Right cardiac atrium (tissue), 5 donors: ENCODE measurements at regions of chr1 and their contacts with region 1.

Region 1: GRCh38 chr1:8727809-8728213 is 89.6 kb downstream of the RERE start:
- DNase-seq: peak; percentile 50 to 86 (median 79)
- ATAC-seq: peak; percentile 50 to 76
- H3K4me3 ChIP-seq: no peak overlapping the region
- H3K27ac ChIP-seq: no peak overlapping the region
- H3K4me1 ChIP-seq: no peaks in the 10 kb centered on the region
- H3K27me3 ChIP-seq: no peaks in the 10 kb centered on the region

Region 2: GRCh38 chr1:8554956-8555534 is 172.8 kb before region 1 on chr1:
- intact Hi-C with region 1: loop called (anchors 5 to 10 kb)
- DNase-seq: no peak
- ATAC-seq: no peak
- H3K4me3 ChIP-seq: no peak overlapping the region
- H3K27ac ChIP-seq: no peak overlapping the region
- H3K4me1 ChIP-seq: peaks cover 1% of the 10 kb centered on the region
- H3K27me3 ChIP-seq: no peaks in the 10 kb centered on the region

Region 3: DNA sequence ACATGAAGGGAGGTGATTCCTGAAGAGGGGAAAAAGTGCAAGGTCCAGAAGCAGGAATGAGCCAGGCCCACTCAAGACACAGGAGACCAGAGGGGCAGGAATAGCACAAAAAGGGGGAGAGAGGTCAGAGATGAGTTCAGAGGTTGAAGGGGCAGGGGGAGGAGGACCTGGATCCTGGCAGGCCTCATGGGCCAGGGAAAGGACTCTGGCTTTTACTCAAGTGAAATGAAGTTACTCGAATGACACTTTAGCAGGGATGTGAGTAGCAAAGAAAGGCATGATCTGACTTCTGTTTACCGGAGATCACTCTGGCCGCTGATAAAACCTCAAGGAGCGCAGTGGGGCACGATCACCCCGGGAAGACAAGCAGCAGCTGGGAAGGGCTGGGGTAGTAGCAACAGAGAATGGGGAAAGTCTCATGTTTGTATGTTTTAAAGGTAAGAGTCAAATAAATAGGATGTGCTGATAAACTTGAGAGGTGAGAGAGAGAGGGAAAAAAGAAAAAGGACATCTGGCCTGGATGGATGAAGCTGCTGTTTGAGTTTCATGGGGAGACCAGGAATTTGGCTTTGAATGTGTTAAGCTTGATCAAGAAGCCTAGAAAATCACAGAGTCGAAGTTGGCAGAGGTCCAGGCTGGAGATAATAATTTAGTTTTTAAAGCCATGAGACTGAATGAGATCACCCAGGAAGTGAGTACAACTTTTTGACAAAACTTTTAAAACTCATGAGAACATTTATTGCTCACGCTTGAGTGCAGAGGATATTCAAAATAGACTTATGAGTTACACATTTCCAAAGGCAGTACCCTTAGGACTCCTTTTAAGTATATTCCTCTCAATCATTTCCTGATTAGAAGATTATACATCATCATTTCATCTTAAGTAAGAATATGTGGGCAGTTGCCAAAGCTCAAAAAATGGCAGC is 66.4 kb before region 1 on chr1:
- intact Hi-C with region 1: no loop called
- DNase-seq: peak in 2 of 3 donors; percentile 59 to 68
- ATAC-seq: peak; percentile 40
- H3K4me3 ChIP-seq: no peak overlapping the region
- H3K27ac ChIP-seq: peak overlapping the region; percentile 89
- H3K4me1 ChIP-seq: peaks cover 27% of the 10 kb centered on the region
- H3K27me3 ChIP-seq: no peaks in the 10 kb centered on the region